Transverse colon (tissue), 4 donors: ENCODE measurements at regions of chr17 and their contacts with region 1.

Region 1: GRCh38 chr17:66255112-66255511 is 25.9 kb upstream of the APOH start:
- DNase-seq: no peak
- H3K4me3 ChIP-seq: no peak overlapping the region
- H3K27ac ChIP-seq: no peak overlapping the region
- H3K4me1 ChIP-seq: peaks cover 0 to 5% (median 1%) of the 10 kb centered on the region in 4 donors
- H3K27me3 ChIP-seq: no peaks in the 10 kb centered on the region
- CTCF ChIP-seq: peak; percentile 64 to 84 (median 72)
- EP300 ChIP-seq: no peak
- POLR2A ChIP-seq: no peak

Region 2: DNA sequence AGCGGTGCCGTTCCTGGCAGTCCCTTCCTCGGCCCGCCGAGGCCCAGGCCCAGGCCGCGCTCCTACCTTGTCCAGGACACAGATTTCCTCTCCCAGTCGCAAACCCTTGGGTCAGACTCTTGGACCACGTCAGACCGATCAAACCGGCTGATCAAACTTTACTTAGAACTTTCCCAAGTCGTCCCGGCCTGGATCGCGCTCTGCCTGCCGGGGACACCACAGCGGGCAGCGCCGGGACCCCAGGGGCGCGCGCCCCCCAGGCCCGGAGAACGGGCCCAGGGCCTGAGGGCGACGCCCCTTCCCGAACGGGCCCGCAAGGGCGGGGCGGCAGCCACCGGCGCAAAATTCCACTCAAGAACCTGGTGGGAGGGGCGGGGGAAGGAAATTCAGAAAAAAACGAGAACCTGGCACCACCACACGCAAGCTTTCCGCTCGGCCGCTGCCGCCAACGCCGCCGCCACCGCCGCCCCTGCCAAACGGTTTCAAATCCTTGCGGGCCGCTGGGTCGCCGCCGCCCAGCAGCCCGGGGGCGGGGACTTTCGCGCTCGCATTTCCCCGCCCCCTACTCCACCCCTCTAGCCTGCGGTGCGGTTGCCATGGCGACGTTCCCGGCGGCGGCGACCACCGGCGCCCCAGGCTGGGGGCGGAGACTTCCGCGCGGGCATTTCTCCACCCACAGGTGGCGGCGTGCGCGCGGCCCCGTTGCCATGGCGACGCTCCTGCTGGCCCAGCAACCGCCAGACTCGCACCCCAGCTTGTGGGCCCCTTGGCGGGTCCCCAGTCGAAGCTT is 63.3 kb before region 1 on chr17 and contains the start of gene CEP112:
- in situ Hi-C with region 1: no loop called
- intact Hi-C with region 1: no loop called
- DNase-seq: peak; percentile 85
- H3K4me3 ChIP-seq: peak within 1 kb of the TSS; percentile 68 to 87 (median 74)
- H3K27ac ChIP-seq: peak within 1 kb of the TSS; percentile 67 to 83 (median 71)
- H3K4me1 ChIP-seq: peaks cover 0 to 24% (median 15%) of the 10 kb centered on the region in 4 donors
- H3K27me3 ChIP-seq: no peaks in the 10 kb centered on the region
- CTCF ChIP-seq: peak in 1 of 5 experiments; percentile 28
- EP300 ChIP-seq: no peak
- POLR2A ChIP-seq: no peak
- total RNA-seq, gene CEP112: 1.1 to 12.9 (median 9.1) TPM

Region 3: GRCh38 chr17:66426397-66427033 is 171.4 kb after region 1 on chr17:
- in situ Hi-C with region 1: loop called in 2 of 4 experiments (anchors 10 to 25 kb)
- intact Hi-C with region 1: no loop called
- DNase-seq: peak; percentile 26
- H3K4me3 ChIP-seq: no peak overlapping the region
- H3K27ac ChIP-seq: no peak overlapping the region
- H3K4me1 ChIP-seq: peaks cover 0 to 28% (median 7%) of the 10 kb centered on the region in 4 donors
- H3K27me3 ChIP-seq: no peaks in the 10 kb centered on the region
- CTCF ChIP-seq: peak in 3 of 5 experiments; percentile 25 to 45 (median 29)
- EP300 ChIP-seq: no peak
- POLR2A ChIP-seq: no peak

Region 4: DNA sequence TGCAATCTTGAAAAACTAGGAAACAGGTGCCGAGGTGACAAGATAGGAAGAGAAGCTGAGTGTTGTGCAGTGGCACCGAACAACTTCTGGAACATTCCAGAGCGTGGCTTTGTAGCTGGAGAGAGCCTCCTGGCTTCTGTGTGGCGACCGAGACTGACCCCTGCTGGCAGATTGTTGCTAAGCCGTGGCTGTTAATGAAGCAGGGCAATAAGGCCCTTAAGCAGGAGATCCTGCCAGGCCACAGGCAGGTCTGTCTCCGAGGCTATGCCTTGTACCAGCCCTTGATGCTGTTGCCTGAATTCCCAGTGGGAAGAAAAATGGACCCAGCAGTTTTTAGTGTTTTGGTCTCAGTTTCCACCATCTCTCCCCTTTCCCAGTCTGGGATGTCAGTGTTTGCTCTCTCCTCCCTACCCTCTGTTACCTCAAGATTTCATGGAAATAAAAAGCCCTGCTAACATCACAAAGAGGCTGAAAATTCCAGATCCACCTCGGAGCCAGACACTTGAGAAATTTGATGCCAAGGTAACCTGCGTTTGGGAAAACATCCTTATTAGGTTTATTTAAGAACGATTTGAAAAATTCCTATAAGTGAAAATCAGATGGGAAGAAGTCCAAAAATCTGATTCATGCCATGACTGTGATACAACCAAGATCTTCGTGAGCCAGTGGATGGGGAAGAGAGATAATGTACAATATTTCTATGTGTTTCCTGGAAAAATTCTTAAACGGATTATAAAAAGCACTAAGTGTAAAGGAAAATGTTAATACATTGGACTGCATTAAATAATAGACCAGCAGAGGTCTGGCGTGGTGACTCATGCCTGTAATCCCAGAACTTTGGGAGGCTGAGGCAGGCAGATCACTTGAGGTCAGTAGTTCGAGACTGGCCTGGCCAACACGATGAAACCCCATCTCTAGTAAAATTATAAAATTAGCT is 312.4 kb after region 1 on chr17:
- in situ Hi-C with region 1: loop called (anchors 5 to 25 kb)
- intact Hi-C with region 1: loop called (anchors 5 kb)
- DNase-seq: peak; percentile 88
- H3K4me3 ChIP-seq: no peak overlapping the region
- H3K27ac ChIP-seq: no peak overlapping the region
- H3K4me1 ChIP-seq: peaks cover 0 to 10% (median 1%) of the 10 kb centered on the region in 4 donors
- H3K27me3 ChIP-seq: no peaks in the 10 kb centered on the region
- CTCF ChIP-seq: peak; percentile 76 to 91 (median 90)
- EP300 ChIP-seq: no peak
- POLR2A ChIP-seq: no peak

Region 5: GRCh38 chr17:66673668-66674315 is 418.7 kb after region 1 on chr17:
- in situ Hi-C with region 1: loop called in 3 of 4 experiments (anchors 10 to 25 kb)
- intact Hi-C with region 1: loop called (anchors 2 kb)
- DNase-seq: peak; percentile 57
- H3K4me3 ChIP-seq: no peak overlapping the region
- H3K27ac ChIP-seq: peak overlapping the region; percentile 33 to 62 (median 56)
- H3K4me1 ChIP-seq: peaks cover 3 to 36% (median 31%) of the 10 kb centered on the region in 4 donors
- H3K27me3 ChIP-seq: no peaks in the 10 kb centered on the region
- CTCF ChIP-seq: peak; percentile 68 to 87 (median 73)
- EP300 ChIP-seq: no peak
- POLR2A ChIP-seq: no peak